ENCODE measurements at regions of chr9 and their contacts with region 1.

Region 1: GRCh38 chr9:86282077-86282978 is at the start of gene ISCA1:
- DNase-seq: peak; percentile 97 to 100 (median 99)
- ATAC-seq: peak; percentile 84 to 85
- H3K4me3 Mint-ChIP-seq: peak within 1 kb of the TSS; percentile 89 to 96 (median 94)
- H3K27ac Mint-ChIP-seq: peak within 1 kb of the TSS; percentile 94 to 100 (median 98)
- H3K4me1 Mint-ChIP-seq: peaks cover 24 to 51% (median 44%) of the 10 kb centered on the region in 4 donors
- H3K27me3 Mint-ChIP-seq: no peaks in the 10 kb centered on the region
- polyA plus RNA-seq, gene ISCA1: 36.7 to 57.7 (median 41.4) TPM

Region 2: DNA sequence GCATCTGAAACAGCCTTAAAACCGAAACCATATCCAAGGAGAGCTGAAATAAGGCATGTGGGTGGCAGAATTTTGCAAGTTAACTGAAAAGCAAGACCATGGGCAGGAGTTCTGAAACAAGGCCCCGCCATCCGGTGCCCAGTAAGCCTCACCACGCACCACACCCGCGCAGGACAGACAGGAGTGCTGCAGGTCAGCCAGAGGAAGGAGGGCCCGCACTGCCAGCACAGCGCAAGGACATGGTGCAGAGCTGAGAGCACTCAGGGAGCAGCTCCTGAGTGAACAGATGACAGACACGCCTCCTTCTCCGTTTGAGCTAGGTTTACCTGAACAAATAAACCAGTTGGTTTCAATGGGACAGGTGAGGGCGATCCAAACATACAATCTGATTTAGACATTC is 16.5 kb after region 1 on chr9:
- POLR2A ChIA-PET with region 1: interaction called, 14 read pairs
- DNase-seq: no peak
- ATAC-seq: no peak
- H3K4me3 Mint-ChIP-seq: no peak overlapping the region
- H3K27ac Mint-ChIP-seq: peak overlapping the region in 6 of 10 donors; percentile 17 to 76 (median 44)
- H3K4me1 Mint-ChIP-seq: peaks cover 9 to 16% (median 14%) of the 10 kb centered on the region in 4 donors
- H3K27me3 Mint-ChIP-seq: no peaks in the 10 kb centered on the region